Activated CD4-positive, alpha-beta T cell treated with anti-CD3 and anti-CD28 coated beads, Interleukin-2, amount 10 ng/mL, durations not matched to agents 24 days and 14 days (primary cell): ENCODE measurements at regions of chr7 and their contacts with region 1.

Region 1: DNA sequence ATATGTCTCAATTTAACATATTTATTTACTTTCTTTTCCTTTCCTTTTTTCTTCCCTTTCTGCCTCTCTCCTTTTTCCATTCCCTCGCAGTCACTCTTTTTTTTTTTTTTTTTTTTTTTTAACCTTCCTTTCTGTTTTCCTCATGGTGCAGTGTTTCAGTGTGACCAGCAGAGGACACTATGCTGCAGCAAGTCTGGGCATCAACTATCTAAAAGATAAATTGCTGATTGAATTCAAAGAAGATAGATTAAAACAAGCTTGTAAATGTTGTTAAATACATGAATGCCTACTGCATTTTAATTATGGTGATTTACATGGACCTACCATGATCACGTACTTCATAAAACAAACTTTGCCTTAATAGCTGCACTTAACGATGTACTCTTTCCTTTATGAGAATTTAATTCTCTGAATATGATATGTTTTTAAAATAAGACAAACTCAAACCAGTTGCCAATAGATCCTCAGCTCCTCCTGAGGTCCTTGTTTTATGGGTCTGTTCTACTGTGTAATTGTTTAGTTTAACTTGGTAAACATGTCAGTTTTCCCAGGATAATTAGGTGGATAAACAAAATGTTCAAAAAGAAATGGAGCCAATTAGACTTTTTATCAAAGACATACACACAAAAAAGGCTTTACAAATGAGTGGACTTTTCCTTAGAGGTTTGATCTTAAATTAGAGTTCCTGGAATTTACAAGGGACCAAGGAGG is 101.0 kb upstream of the AGR3 start:
- DNase-seq: peak; percentile 75
- H3K4me3 Mint-ChIP-seq: peak overlapping the region; percentile 20
- H3K27ac Mint-ChIP-seq: no peak overlapping the region
- H3K4me1 Mint-ChIP-seq: peaks cover 15% of the 10 kb centered on the region
- H3K27me3 Mint-ChIP-seq: peaks cover 36% of the 10 kb centered on the region

Region 2: GRCh38 chr7:16926283-16926682 is 56.5 kb before region 1 on chr7:
- intact Hi-C with region 1: loop called (anchors 1 kb)
- DNase-seq: peak; percentile 72
- H3K4me3 Mint-ChIP-seq: no peak overlapping the region
- H3K27ac Mint-ChIP-seq: peak overlapping the region; percentile 48
- H3K4me1 Mint-ChIP-seq: peaks cover 45% of the 10 kb centered on the region
- H3K27me3 Mint-ChIP-seq: no peaks in the 10 kb centered on the region

Region 3: DNA sequence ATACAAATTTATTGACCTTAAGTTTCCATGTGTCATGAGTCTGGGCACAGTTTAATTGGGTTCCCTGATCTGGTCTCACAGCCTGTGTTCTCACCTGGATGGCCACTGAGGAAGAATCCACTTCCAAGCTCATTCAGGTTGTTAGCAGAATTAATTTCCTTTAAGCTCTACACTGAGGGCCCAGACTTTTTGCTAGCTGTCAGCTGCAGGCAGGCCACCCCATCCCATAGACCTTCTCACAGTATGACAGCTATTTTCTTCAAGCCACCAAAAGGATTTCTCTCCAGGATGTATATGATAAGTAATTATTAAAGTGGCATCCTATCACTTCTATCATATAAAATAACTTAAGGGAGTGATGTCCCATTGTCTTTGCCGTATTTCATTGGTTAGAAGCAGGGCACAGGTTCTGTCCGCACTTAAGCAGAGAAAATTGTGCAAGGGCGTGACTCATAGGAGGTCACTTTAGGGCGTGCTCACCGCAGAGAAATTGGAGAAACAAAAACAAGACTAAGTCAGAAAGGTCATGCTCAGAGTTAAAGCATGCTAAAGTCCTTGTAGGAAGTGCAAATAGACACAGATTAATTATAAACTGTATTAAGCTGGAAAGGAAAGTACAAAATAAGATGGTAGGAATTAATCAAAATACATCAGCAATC is 425.6 kb after region 1 on chr7:
- intact Hi-C with region 1: loop called (anchors 10 kb)
- DNase-seq: peak; percentile 42
- H3K4me3 Mint-ChIP-seq: no peak overlapping the region
- H3K27ac Mint-ChIP-seq: no peak overlapping the region
- H3K4me1 Mint-ChIP-seq: peaks cover 2% of the 10 kb centered on the region
- H3K27me3 Mint-ChIP-seq: peaks cover 9% of the 10 kb centered on the region

Region 4: DNA sequence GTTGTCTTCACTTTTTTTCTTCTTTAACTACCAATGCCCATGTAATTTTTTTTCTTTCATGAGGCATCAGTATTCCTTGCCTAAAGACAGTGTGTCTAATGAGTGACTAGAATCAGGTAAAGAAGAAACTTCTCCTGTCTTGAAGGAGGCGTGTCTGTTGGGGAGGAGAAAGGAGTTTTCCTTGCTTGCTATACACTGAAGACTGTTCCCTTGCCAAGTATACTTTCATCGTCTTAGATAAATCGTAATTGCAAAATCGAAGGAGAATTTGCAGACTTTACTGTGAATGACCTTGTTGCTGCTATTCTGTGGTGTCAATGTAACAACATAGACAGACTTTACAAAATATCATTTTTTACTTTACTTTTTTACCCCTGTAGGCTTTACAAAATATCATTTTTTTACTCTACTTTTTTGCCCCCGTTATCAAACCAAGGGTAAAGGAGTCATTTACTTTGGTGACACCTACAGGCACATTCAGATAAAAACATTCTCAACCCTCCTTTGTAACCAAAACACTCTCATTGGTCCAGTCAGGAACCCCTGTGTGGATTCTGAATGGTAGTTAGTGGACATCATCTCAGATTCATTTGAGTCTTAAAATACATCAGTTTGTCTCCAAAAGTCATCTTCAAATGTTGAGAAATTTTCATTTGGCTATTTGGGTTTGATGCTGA is 548.1 kb after region 1 on chr7:
- intact Hi-C with region 1: loop called (anchors 1 kb)
- DNase-seq: no peak
- H3K4me3 Mint-ChIP-seq: no peak overlapping the region
- H3K27ac Mint-ChIP-seq: no peak overlapping the region
- H3K4me1 Mint-ChIP-seq: peaks cover 9% of the 10 kb centered on the region
- H3K27me3 Mint-ChIP-seq: peaks cover 3% of the 10 kb centered on the region

Region 5: GRCh38 chr7:17654940-17655339 is 672.1 kb after region 1 on chr7:
- intact Hi-C with region 1: loop called (anchors 5 kb)
- DNase-seq: no peak
- H3K4me3 Mint-ChIP-seq: no peak overlapping the region
- H3K27ac Mint-ChIP-seq: no peak overlapping the region
- H3K4me1 Mint-ChIP-seq: no peaks in the 10 kb centered on the region
- H3K27me3 Mint-ChIP-seq: peaks cover 5% of the 10 kb centered on the region